ENCODE measurements at regions of chr19 and their contacts with region 1.

Region 1: GRCh38 chr19:2427429-2428320 is at the start of gene TIMM13:
- DNase-seq: peak; percentile 96 to 99 (median 98)
- ATAC-seq: peak; percentile 96
- H3K4me3 ChIP-seq: peak within 1 kb of the TSS; percentile 97
- H3K4me3 Mint-ChIP-seq: peak within 1 kb of the TSS; percentile 89 to 98 (median 95)
- H3K27ac ChIP-seq: peak within 1 kb of the TSS; percentile 91
- H3K27ac Mint-ChIP-seq: peak within 1 kb of the TSS; percentile 93 to 99 (median 97)
- H3K4me1 ChIP-seq: peaks cover 11 to 16% of the 10 kb centered on the region in 2 donors
- H3K4me1 Mint-ChIP-seq: peaks cover 0 to 16% (median 14%) of the 10 kb centered on the region in 7 donors
- H3K27me3 ChIP-seq: no peaks in the 10 kb centered on the region
- H3K27me3 Mint-ChIP-seq: peaks cover 0 to 2% (median 0%) of the 10 kb centered on the region in 5 donors
- total RNA-seq, gene TIMM13: 31.3 to 70.8 (median 35.4) TPM

Region 2: GRCh38 chr19:2176337-2176994 is 251.2 kb before region 1 on chr19:
- CTCF ChIA-PET with region 1: no interaction called
- POLR2A ChIA-PET with region 1: no interaction called
- intact Hi-C with region 1: no loop called
- DNase-seq: no peak
- ATAC-seq: no peak
- H3K4me3 ChIP-seq: no peak overlapping the region
- H3K4me3 Mint-ChIP-seq: no peak overlapping the region
- H3K27ac ChIP-seq: no peak overlapping the region
- H3K27ac Mint-ChIP-seq: no peak overlapping the region
- H3K4me1 ChIP-seq: peaks cover 0 to 4% of the 10 kb centered on the region in 2 donors
- H3K4me1 Mint-ChIP-seq: peaks cover 3 to 41% (median 17%) of the 10 kb centered on the region in 7 donors
- H3K27me3 ChIP-seq: no peaks in the 10 kb centered on the region
- H3K27me3 Mint-ChIP-seq: no peaks in the 10 kb centered on the region

Region 3: DNA sequence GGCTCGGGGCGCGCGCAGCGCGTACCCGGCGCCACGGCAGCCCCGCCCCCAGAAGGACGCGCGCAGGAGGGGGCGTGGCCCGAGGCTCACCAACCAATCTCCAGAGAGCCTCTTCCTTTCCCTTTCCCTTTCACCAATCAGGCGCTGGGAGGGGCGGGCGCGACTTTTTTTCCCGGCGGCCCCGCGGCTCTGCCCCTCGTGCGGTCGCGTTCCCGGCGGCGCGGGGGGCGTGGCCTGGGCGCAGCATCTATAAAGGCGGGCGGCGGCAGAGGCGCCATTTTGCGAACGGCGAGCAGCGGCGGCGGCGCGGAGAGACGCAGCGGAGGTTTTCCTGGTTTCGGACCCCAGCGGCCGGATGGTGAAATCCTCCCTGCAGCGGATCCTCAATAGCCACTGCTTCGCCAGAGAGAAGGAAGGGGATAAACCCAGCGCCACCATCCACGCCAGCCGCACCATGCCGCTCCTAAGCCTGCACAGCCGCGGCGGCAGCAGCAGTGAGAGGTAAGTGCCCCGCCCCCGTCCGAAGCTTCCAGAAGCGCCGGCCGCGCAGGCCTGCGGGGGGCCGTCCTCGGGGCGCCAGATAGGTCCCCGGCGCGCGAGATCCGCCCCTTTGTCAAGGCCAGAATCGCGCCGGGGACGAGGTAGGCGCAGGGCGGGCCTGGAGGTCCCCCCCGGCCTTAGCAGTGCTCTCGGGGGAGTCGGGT is 158.3 kb before region 1 on chr19:
- CTCF ChIA-PET with region 1: no interaction called
- POLR2A ChIA-PET with region 1: interaction called, 5 read pairs
- intact Hi-C with region 1: loop called in 1 of 2 experiments (anchors 1 kb)
- DNase-seq: peak; percentile 98 to 100 (median 99)
- ATAC-seq: peak; percentile 90
- H3K4me3 ChIP-seq: peak overlapping the region; percentile 96
- H3K4me3 Mint-ChIP-seq: peak overlapping the region; percentile 86 to 96 (median 90)
- H3K27ac ChIP-seq: peak overlapping the region; percentile 87
- H3K27ac Mint-ChIP-seq: peak overlapping the region; percentile 72 to 94 (median 89)
- H3K4me1 ChIP-seq: peaks cover 32 to 34% of the 10 kb centered on the region in 2 donors
- H3K4me1 Mint-ChIP-seq: peaks cover 28 to 52% (median 35%) of the 10 kb centered on the region in 7 donors
- H3K27me3 ChIP-seq: no peaks in the 10 kb centered on the region
- H3K27me3 Mint-ChIP-seq: no peaks in the 10 kb centered on the region

Region 4: GRCh38 chr19:2391118-2391725 is 36.5 kb before region 1 on chr19:
- CTCF ChIA-PET with region 1: no interaction called
- POLR2A ChIA-PET with region 1: interaction called, 4 read pairs
- intact Hi-C with region 1: loop called in 1 of 2 experiments (anchors 5 kb)
- DNase-seq: peak in 7 of 9 donors; percentile 26 to 59 (median 46)
- ATAC-seq: peak; percentile 88
- H3K4me3 ChIP-seq: no peak overlapping the region
- H3K4me3 Mint-ChIP-seq: no peak overlapping the region
- H3K27ac ChIP-seq: no peak overlapping the region
- H3K27ac Mint-ChIP-seq: peak overlapping the region in 2 of 9 donors; percentile 1 to 91
- H3K4me1 ChIP-seq: no peaks in the 10 kb centered on the region
- H3K4me1 Mint-ChIP-seq: peaks cover 4 to 16% (median 5%) of the 10 kb centered on the region in 7 donors
- H3K27me3 ChIP-seq: no peaks in the 10 kb centered on the region
- H3K27me3 Mint-ChIP-seq: peaks cover 0 to 13% (median 0%) of the 10 kb centered on the region in 5 donors

Region 5: DNA sequence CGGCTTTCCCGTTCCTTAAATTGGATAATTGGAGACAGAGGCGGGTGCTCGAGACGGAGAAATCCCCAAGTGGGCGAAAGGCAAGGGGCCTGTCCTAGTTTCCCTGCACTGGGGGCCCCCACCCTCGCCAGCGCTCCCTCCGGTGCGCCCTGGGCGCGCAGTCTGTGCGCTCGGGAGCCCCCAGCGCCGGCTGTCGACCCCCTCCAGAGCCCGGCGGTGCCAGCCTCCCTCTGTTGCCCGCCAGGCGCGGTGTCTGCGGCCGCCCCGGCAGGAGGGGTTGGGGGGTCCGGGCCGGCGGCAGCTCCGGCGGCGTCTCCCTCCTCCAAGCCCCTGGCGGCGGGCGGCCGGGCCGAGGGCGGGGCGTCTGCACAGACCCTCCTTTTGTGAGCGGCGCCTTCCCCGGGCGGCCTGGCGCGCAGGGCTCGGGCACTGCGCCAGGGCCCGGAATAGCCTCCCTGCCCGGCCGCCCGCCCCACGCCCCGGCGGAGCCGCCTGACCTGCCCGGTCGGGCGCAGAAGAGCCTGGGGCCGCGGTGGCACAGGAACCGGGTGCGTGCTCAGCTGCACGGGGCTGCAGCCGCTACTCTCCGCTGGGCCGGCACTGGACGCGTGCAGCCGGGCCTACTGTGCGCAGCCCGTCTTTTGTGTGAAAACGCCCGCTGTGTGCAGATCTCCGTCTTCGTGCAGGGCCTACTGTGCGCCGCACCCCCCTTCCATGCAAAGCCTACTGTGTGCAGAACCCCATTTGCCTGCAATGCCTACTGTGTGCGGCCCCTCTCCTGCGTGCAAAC is 61.5 kb after region 1 on chr19:
- CTCF ChIA-PET with region 1: no interaction called
- POLR2A ChIA-PET with region 1: no interaction called
- intact Hi-C with region 1: no loop called
- DNase-seq: no peak
- ATAC-seq: peak; percentile 20
- H3K4me3 ChIP-seq: peak overlapping the region; percentile 13
- H3K4me3 Mint-ChIP-seq: peak overlapping the region; percentile 32 to 88 (median 65)
- H3K27ac ChIP-seq: no peak overlapping the region
- H3K27ac Mint-ChIP-seq: no peak overlapping the region
- H3K4me1 ChIP-seq: peaks cover 4 to 7% of the 10 kb centered on the region in 2 donors
- H3K4me1 Mint-ChIP-seq: peaks cover 8 to 28% (median 22%) of the 10 kb centered on the region in 7 donors
- H3K27me3 ChIP-seq: peaks cover 4 to 8% of the 10 kb centered on the region in 2 donors
- H3K27me3 Mint-ChIP-seq: peaks cover 20 to 77% (median 27%) of the 10 kb centered on the region in 5 donors

Region 6: GRCh38 chr19:2529473-2529918 is 101.8 kb after region 1 on chr19:
- CTCF ChIA-PET with region 1: no interaction called
- POLR2A ChIA-PET with region 1: no interaction called
- intact Hi-C with region 1: no loop called
- DNase-seq: no peak
- ATAC-seq: no peak
- H3K4me3 ChIP-seq: no peak overlapping the region
- H3K4me3 Mint-ChIP-seq: no peak overlapping the region
- H3K27ac ChIP-seq: no peak overlapping the region
- H3K27ac Mint-ChIP-seq: no peak overlapping the region
- H3K4me1 ChIP-seq: peaks cover 3 to 7% of the 10 kb centered on the region in 2 donors
- H3K4me1 Mint-ChIP-seq: peaks cover 13 to 22% (median 14%) of the 10 kb centered on the region in 7 donors
- H3K27me3 ChIP-seq: no peaks in the 10 kb centered on the region
- H3K27me3 Mint-ChIP-seq: no peaks in the 10 kb centered on the region

Region 7: DNA sequence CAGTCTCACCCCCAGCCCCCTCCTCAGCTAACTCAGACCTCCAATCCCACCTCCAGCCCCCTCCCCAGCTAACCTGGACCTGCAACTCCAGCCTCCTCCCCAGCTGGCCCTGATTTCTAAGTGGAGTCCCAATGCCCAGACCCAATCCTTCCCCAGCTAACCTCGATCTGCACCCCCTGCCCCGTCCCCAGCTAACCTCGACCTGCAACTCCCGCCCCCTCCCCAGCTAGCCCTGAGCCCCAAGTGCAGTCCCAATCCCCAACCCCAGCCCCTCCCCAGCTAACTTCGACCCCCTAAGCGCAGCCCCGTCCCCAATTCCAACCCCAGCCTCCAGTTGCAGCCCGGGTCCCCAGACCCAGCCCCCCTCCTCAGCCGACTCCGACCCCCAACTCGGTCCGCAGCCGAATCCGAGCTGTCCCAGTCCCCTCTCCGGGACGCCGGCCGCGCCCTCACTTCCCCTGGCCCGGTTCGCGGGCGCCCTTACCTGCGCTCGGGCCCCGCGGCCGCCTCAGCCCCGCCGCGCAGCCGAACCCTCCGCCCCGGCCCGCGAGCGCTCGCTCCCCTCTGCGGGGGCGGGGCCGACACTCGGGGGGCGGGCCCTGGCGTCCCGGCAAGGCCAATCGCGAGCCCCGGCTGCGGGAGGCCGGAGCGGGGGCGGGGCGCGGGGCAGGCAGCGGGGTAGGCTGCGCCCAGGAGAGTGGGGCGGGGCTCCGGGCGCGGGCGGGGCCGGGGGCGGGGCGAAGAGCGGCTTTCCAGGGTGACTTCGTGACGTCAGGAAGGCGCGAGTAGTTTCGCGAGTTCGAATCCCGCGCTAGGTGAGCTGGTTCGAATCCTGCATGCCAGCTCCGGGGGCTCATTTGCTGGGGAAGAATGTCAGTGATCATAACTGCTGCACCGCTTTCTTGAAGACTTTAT is 274.7 kb after region 1 on chr19 and contains the start of gene GNG7:
- CTCF ChIA-PET with region 1: no interaction called
- POLR2A ChIA-PET with region 1: no interaction called
- intact Hi-C with region 1: loop called in 1 of 2 experiments (anchors 1 kb)
- DNase-seq: peak; percentile 92 to 98 (median 96)
- ATAC-seq: peak; percentile 100
- H3K4me3 ChIP-seq: peak within 1 kb of the TSS; percentile 39
- H3K4me3 Mint-ChIP-seq: peak within 1 kb of the TSS; percentile 69 to 87 (median 78)
- H3K27ac ChIP-seq: peak within 1 kb of the TSS; percentile 67
- H3K27ac Mint-ChIP-seq: peak within 1 kb of the TSS; percentile 23 to 90 (median 72)
- H3K4me1 ChIP-seq: peaks cover 0 to 16% of the 10 kb centered on the region in 2 donors
- H3K4me1 Mint-ChIP-seq: peaks cover 6 to 41% (median 39%) of the 10 kb centered on the region in 7 donors
- H3K27me3 ChIP-seq: no peaks in the 10 kb centered on the region
- H3K27me3 Mint-ChIP-seq: peaks cover 0 to 12% (median 0%) of the 10 kb centered on the region in 5 donors
- total RNA-seq, gene GNG7: 0.31 to 6.8 (median 6.6) TPM

Region 8: GRCh38 chr19:3125900-3126524 is 698.3 kb after region 1 on chr19:
- CTCF ChIA-PET with region 1: no interaction called
- POLR2A ChIA-PET with region 1: no interaction called
- intact Hi-C with region 1: no loop called
- DNase-seq: peak in 8 of 9 donors; percentile 32 to 74 (median 64)
- ATAC-seq: peak; percentile 92
- H3K4me3 ChIP-seq: no peak overlapping the region
- H3K4me3 Mint-ChIP-seq: no peak overlapping the region
- H3K27ac ChIP-seq: no peak overlapping the region
- H3K27ac Mint-ChIP-seq: no peak overlapping the region
- H3K4me1 ChIP-seq: no peaks in the 10 kb centered on the region
- H3K4me1 Mint-ChIP-seq: peaks cover 0 to 21% (median 5%) of the 10 kb centered on the region in 7 donors
- H3K27me3 ChIP-seq: no peaks in the 10 kb centered on the region
- H3K27me3 Mint-ChIP-seq: peaks cover 0 to 6% (median 2%) of the 10 kb centered on the region in 5 donors

Region 9: DNA sequence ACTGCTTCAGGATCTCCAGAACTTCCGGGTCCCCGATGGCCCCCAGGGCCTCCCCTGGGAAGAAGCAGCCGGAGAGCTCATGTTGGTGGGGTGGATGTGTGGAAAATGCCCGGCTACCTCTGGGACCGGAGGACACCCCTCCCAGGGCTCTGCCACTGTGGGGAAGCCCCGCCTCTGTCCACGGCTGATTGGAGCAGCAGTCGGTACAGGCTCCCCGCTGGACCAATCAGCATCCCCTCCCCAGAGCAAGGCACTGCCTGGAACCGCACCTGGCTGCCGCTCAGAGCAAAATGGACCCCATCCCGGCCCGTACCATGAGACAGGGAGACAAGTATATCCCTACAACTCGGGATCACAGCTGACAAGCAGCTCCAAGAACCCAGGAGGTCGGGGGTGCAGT is 1066.4 kb after region 1 on chr19:
- CTCF ChIA-PET with region 1: no interaction called
- POLR2A ChIA-PET with region 1: no interaction called
- intact Hi-C with region 1: loop called in 1 of 2 experiments (anchors 10 kb)
- DNase-seq: peak in 6 of 9 donors; percentile 23 to 47 (median 38)
- ATAC-seq: peak; percentile 73
- H3K4me3 ChIP-seq: no peak overlapping the region
- H3K4me3 Mint-ChIP-seq: peak overlapping the region in 3 of 10 donors; percentile 46 to 51 (median 51)
- H3K27ac ChIP-seq: peak overlapping the region; percentile 48
- H3K27ac Mint-ChIP-seq: peak overlapping the region in 4 of 9 donors; percentile 5 to 71 (median 45)
- H3K4me1 ChIP-seq: no peaks in the 10 kb centered on the region
- H3K4me1 Mint-ChIP-seq: peaks cover 3 to 24% (median 12%) of the 10 kb centered on the region in 7 donors
- H3K27me3 ChIP-seq: no peaks in the 10 kb centered on the region
- H3K27me3 Mint-ChIP-seq: no peaks in the 10 kb centered on the region